ENCODE measurements at regions of chr13 and their contacts with region 1.

Region 1: GRCh38 chr13:76903544-76904162 is 17.4 kb upstream of the KCTD12 start:
- DNase-seq: no peak
- H3K4me3 ChIP-seq: no peak overlapping the region
- H3K27ac ChIP-seq: no peak overlapping the region
- H3K4me1 ChIP-seq: peaks cover 0 to 6% (median 0%) of the 10 kb centered on the region in 4 donors
- H3K27me3 ChIP-seq: no peaks in the 10 kb centered on the region
- CTCF ChIP-seq: peak; percentile 96 to 99 (median 96)
- EP300 ChIP-seq: no peak
- POLR2A ChIP-seq: no peak

Region 2: DNA sequence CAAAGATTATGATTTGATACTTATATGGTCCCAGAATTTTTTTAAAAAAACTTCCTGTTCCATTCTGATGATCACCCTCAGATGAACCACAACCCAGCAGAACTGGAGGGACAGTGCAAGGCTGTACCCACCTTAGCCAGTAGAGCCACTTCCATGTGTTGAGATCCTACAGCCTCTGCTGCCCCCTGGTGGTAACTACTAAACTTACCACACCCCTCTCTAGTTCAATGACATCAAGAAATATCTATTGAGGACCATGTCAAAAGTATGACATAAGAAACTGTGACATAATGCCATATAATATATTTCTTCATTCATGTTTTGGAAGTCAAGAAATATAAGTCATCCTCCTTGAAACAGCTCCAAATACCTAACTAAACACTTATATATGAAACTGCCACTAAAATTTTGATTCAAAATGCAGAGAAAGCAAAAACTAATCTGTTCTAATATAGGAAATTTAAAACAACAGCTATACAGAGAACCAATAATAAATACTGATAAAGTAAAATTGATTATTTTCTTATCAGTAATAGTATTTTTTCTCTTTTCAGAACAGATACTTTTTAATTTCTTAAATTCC is 430.0 kb before region 1 on chr13:
- intact Hi-C with region 1: loop called (anchors 5 kb)
- DNase-seq: no peak
- H3K4me3 ChIP-seq: no peak overlapping the region
- H3K27ac ChIP-seq: no peak overlapping the region
- H3K4me1 ChIP-seq: peaks cover 4 to 20% (median 15%) of the 10 kb centered on the region in 4 donors
- H3K27me3 ChIP-seq: no peaks in the 10 kb centered on the region
- CTCF ChIP-seq: peak; percentile 81 to 90 (median 84)
- EP300 ChIP-seq: no peak
- POLR2A ChIP-seq: no peak

Region 3: GRCh38 chr13:76667551-76667950 is 236.1 kb before region 1 on chr13:
- intact Hi-C with region 1: loop called (anchors 5 kb)
- DNase-seq: no peak
- H3K4me3 ChIP-seq: no peak overlapping the region
- H3K27ac ChIP-seq: no peak overlapping the region
- H3K4me1 ChIP-seq: peaks cover 0 to 24% (median 13%) of the 10 kb centered on the region in 4 donors
- H3K27me3 ChIP-seq: no peaks in the 10 kb centered on the region
- CTCF ChIP-seq: peak; percentile 29 to 42 (median 30)
- EP300 ChIP-seq: no peak
- POLR2A ChIP-seq: no peak

Region 4: DNA sequence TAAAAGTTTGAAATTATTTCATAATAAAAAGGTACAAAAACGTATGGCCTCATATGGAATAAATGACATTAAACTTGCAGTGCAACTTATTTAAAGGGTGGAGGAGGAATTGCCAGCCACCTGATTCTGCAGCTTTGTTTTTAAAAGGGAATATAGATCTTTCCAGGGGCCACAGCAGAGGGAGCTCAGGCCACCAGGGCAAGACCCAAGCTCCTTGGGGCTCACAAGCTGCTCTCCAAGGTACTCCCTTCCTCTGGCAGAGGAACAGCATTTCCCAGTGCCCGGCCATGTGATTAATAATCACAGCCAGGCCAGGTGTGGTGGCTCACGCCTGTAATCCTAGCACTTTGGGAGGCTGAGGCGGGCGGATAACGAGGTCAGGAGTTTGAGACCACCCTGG is 50.9 kb after region 1 on chr13:
- intact Hi-C with region 1: no loop called
- DNase-seq: no peak
- H3K4me3 ChIP-seq: no peak overlapping the region
- H3K27ac ChIP-seq: no peak overlapping the region
- H3K4me1 ChIP-seq: no peaks in the 10 kb centered on the region
- H3K27me3 ChIP-seq: no peaks in the 10 kb centered on the region
- CTCF ChIP-seq: no peak
- EP300 ChIP-seq: no peak
- POLR2A ChIP-seq: no peak

Region 5: GRCh38 chr13:77099415-77099814 is 195.8 kb after region 1 on chr13:
- intact Hi-C with region 1: no loop called
- DNase-seq: no peak
- H3K4me3 ChIP-seq: no peak overlapping the region
- H3K27ac ChIP-seq: no peak overlapping the region
- H3K4me1 ChIP-seq: no peaks in the 10 kb centered on the region
- H3K27me3 ChIP-seq: no peaks in the 10 kb centered on the region
- CTCF ChIP-seq: no peak
- EP300 ChIP-seq: no peak
- POLR2A ChIP-seq: no peak

Region 6: DNA sequence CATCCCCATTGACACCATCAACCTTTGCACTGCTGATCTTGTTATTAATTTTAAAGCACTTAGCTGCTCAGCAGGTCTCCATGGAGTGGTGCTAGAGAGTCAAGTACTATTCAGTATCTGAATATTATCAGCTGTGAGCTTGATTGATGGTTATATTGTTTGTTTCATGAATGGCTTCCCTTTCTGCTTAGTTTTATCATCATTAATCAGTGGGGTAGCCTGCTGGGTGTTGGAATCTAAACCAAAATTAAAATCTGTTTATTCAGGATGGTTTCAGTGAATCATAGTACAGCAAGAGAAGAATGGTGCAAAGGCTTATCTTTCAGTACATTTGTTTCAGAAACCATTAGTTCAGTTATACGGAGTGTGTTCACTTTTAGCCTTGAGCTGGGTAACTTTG is 589.3 kb after region 1 on chr13:
- intact Hi-C with region 1: no loop called
- DNase-seq: no peak
- H3K4me3 ChIP-seq: no peak overlapping the region
- H3K27ac ChIP-seq: no peak overlapping the region
- H3K4me1 ChIP-seq: peaks cover 0 to 8% (median 0%) of the 10 kb centered on the region in 4 donors
- H3K27me3 ChIP-seq: no peaks in the 10 kb centered on the region
- CTCF ChIP-seq: peak; percentile 32 to 48 (median 40)
- EP300 ChIP-seq: no peak
- POLR2A ChIP-seq: no peak

Measured in esophagus muscularis mucosa (tissue), 4 donors.